Right cardiac atrium (tissue), 5 donors: ENCODE measurements at regions of chr4 and their contacts with region 1.

Region 1: GRCh38 chr4:80215449-80216052 is 18.2 kb downstream of the PRDM8 start:
- DNase-seq: no peak
- ATAC-seq: no peak
- H3K4me3 ChIP-seq: no peak overlapping the region
- H3K27ac ChIP-seq: no peak overlapping the region
- H3K4me1 ChIP-seq: no peaks in the 10 kb centered on the region
- H3K27me3 ChIP-seq: no peaks in the 10 kb centered on the region

Region 2: DNA sequence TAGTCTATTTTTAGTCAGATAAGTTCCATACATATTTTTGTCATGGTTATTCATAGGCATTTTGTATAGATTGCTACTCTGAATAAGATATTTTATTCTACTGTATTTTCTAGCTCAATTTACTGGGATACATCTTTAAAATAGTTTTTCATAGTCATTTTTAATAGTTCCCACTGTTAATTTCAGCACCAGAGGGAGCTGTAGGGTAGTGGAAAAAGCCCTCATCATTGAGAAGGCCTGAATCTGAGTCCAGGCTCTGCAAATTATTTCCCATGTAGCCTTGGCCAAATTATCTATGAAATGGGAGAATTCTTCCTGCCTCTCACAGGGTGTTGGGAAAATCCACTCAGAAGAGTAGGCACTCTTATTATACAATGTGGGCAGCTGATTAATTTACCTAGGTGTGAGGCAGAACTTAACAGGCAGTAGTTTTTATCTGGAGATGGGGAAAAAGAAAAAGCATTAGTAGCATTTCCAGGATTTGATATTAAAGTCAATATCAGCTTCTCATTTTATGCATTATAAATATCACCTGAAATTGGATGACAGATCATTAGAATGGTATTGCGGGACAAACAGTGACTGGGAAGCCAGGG is 1173.4 kb before region 1 on chr4:
- intact Hi-C with region 1: loop called in 2 of 4 experiments (anchors 10 kb)
- DNase-seq: no peak
- ATAC-seq: peak in 1 of 2 donors; percentile 35
- H3K4me3 ChIP-seq: no peak overlapping the region
- H3K27ac ChIP-seq: no peak overlapping the region
- H3K4me1 ChIP-seq: no peaks in the 10 kb centered on the region
- H3K27me3 ChIP-seq: no peaks in the 10 kb centered on the region

Region 3: GRCh38 chr4:79917246-79917645 is 298.3 kb before region 1 on chr4:
- intact Hi-C with region 1: loop called in 1 of 4 experiments (anchors 5 kb)
- DNase-seq: peak; percentile 18 to 62 (median 35)
- ATAC-seq: no peak
- H3K4me3 ChIP-seq: no peak overlapping the region
- H3K27ac ChIP-seq: no peak overlapping the region
- H3K4me1 ChIP-seq: peaks cover 2% of the 10 kb centered on the region
- H3K27me3 ChIP-seq: no peaks in the 10 kb centered on the region

Region 4: DNA sequence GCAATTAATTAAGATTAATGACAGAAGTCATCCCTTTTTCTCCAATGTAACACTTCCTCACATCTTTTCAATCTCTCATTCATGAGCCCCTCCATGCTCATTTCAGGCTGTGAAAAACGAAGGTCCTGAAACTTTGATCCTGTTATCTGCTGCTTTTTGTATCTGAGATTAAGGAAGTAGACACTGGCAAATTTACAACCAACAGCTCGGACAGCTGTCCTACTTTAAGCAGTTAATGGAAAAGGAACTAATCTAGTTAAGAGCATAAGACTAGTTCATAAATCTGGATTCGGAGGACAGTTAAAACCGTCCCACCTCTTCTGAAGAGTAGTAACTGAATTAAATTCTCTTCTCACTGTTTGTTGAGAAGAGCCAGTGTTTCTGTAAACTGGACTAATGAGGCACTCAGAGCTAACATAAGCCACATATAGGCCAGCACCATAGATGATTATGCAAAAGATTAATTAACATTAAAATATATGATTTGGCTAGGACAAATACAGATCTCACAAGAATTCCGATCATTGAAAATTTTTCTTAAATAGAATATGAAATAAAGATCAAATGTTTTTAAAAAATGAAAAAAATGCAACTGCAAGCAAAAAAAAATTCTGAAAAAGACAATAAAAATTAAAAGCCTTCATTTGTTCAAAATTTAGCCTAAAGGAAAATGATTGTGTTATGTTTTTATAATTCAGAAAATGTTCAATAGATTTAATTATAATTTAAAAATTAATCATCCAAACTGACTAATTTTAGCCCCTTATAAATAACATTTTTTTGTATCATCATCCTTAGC is 256.9 kb before region 1 on chr4:
- intact Hi-C with region 1: no loop called
- DNase-seq: no peak
- ATAC-seq: no peak
- H3K4me3 ChIP-seq: no peak overlapping the region
- H3K27ac ChIP-seq: no peak overlapping the region
- H3K4me1 ChIP-seq: no peaks in the 10 kb centered on the region
- H3K27me3 ChIP-seq: no peaks in the 10 kb centered on the region

Region 5: GRCh38 chr4:80343887-80344286 is 128.3 kb after region 1 on chr4:
- intact Hi-C with region 1: no loop called
- DNase-seq: no peak
- ATAC-seq: no peak
- H3K4me3 ChIP-seq: no peak overlapping the region
- H3K27ac ChIP-seq: no peak overlapping the region
- H3K4me1 ChIP-seq: no peaks in the 10 kb centered on the region
- H3K27me3 ChIP-seq: no peaks in the 10 kb centered on the region